ENCODE measurements at regions of chr14 and their contacts with region 1.

Region 1: GRCh38 chr14:23631702-23632460 is 4.3 kb upstream of the DHRS2 start:
- DNase-seq: peak; percentile 63
- H3K4me3 ChIP-seq: no peak overlapping the region
- H3K27ac ChIP-seq: no peak overlapping the region
- H3K27me3 ChIP-seq: peaks cover 3% of the 10 kb centered on the region
- CTCF ChIP-seq: peak; percentile 96

Region 2: GRCh38 chr14:23209651-23210423 is 422.0 kb before region 1 on chr14:
- CTCF ChIA-PET with region 1: no interaction called
- POLR2A ChIA-PET with region 1: no interaction called
- DNase-seq: no peak
- H3K4me3 ChIP-seq: no peak overlapping the region
- H3K27ac ChIP-seq: no peak overlapping the region
- H3K27me3 ChIP-seq: peaks cover 11% of the 10 kb centered on the region
- CTCF ChIP-seq: no peak

Region 3: GRCh38 chr14:23588884-23589598 is 42.8 kb before region 1 on chr14:
- CTCF ChIA-PET with region 1: interaction called, 11 read pairs
- POLR2A ChIA-PET with region 1: no interaction called
- DNase-seq: peak; percentile 60
- H3K4me3 ChIP-seq: no peak overlapping the region
- H3K27ac ChIP-seq: no peak overlapping the region
- H3K27me3 ChIP-seq: no peaks in the 10 kb centered on the region
- CTCF ChIP-seq: peak; percentile 79

Region 4: DNA sequence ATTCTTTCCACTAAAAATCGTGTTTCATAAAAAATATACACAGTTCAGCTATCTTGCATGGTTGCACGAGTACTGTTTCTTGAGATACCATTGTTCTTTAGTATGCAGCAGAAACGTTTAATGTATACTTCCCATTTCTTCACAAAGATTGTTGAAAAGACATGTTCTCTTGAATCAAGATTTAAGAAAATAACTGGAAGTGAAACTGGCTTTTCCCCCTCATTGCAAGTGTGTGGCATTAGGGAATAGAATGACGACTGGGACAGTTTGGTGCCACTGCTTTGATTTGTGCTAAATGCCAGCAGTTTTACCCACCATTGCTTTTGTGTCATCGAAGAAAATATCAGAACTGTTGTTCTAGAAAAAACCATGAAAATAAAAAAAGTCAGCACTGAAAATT is 16.0 kb before region 1 on chr14:
- CTCF ChIA-PET with region 1: interaction called, 27 read pairs
- POLR2A ChIA-PET with region 1: no interaction called
- DNase-seq: no peak
- H3K4me3 ChIP-seq: no peak overlapping the region
- H3K27ac ChIP-seq: no peak overlapping the region
- H3K27me3 ChIP-seq: no peaks in the 10 kb centered on the region
- CTCF ChIP-seq: no peak

Region 5: DNA sequence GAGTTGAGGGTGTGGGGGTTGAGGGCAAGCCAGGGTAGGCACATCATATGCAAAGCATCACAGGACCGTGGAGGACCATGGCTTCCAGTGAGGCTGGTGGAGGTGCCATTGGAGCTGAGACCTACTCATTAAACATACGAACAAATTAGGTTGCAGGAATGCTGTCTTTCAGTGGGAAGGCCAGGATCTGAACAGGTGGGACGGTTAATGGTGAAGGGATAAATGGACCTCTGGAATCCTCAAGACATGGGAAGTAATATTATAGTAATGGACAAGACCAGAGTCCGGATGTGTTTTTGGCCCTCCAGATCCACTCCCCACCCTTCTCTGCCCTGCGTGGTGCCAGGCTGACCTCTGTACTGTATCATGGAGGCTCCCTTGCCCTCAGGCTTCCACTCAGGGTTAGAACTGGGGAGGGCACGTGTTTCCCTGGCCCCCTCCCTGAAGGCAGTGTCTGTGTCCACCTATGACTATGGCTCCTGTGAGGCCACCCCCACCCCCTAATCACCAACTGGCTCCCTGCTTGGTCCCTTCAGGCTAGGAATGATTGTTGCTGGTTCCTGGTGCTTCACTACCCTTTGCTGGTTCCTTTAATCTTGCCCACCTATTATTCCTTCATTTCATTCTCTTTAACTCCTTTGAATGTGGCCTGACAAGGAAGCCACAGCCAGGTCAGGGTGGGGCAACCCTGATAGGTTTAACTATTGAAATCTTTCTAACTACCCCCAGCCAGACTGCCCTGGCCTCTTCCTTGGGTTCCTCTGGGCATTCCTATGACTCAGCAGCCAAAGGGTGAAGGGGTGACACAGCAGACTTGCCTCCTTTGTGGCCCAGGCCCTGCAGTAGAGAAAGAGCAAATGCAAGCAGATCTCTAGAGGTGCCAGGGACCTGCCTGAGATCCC is 15.0 kb after region 1 on chr14:
- CTCF ChIA-PET with region 1: interaction called, 47 read pairs
- POLR2A ChIA-PET with region 1: no interaction called
- DNase-seq: no peak
- H3K4me3 ChIP-seq: no peak overlapping the region
- H3K27ac ChIP-seq: no peak overlapping the region
- H3K27me3 ChIP-seq: peaks cover 3% of the 10 kb centered on the region
- CTCF ChIP-seq: no peak

Region 6: DNA sequence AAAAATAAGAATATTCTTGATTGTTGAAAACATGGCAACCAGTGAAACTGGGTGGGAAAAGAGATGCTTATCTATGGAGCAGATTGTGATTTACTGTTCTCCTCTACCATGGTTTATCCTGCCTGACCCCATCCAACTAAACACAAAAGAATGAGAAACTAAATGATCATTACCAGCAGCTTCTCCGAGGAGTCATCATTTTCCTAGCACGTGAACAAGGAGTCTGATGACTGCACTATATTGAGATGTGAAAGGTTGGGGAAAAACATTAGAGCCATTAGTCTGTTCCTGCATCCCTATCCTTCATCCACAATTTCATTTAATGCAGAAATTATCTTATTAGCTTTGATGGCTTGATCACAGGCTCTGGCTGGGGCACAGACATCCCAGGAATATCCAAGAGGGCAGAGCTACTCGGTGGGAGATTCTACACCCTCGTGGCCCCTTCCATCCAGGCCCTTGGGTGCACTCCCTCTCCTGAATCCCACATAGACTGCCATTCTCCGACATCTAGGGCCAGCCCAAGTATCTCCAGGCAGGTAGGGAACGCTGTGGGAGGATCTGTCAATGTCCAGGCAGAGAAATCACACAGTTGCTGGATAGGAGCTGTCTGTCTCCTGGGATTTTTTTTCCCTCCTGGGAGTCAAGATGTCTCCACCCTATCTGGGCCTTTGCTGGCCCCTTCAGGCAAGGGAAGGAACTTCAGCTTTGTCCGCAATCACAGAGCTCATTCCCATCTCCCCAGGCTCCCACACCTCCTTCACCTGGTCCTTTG is 278.4 kb after region 1 on chr14:
- CTCF ChIA-PET with region 1: interaction called, 94 read pairs
- POLR2A ChIA-PET with region 1: no interaction called
- DNase-seq: peak; percentile 3
- H3K4me3 ChIP-seq: no peak overlapping the region
- H3K27ac ChIP-seq: no peak overlapping the region
- H3K27me3 ChIP-seq: no peaks in the 10 kb centered on the region
- CTCF ChIP-seq: peak; percentile 93